PC-9 (cell line): ENCODE measurements at regions of chr12 and their contacts with region 1.

Region 1: GRCh38 chr12:13211859-13212664 is 15.5 kb downstream of the EMP1 start:
- DNase-seq: peak in 1 of 2 experiments; percentile 64
- H3K4me3 ChIP-seq: no peak overlapping the region
- H3K27ac ChIP-seq: peak overlapping the region; percentile 99
- H3K4me1 ChIP-seq: peaks cover 48% of the 10 kb centered on the region
- H3K27me3 ChIP-seq: no peaks in the 10 kb centered on the region
- CTCF ChIP-seq: peak; percentile 71

Region 2: GRCh38 chr12:11877869-11878780 is 1333.9 kb before region 1 on chr12:
- CTCF ChIA-PET with region 1: no interaction called
- POLR2A ChIA-PET with region 1: no interaction called
- intact Hi-C with region 1: loop called (anchors 10 kb)
- DNase-seq: peak; percentile 85 to 93
- H3K4me3 ChIP-seq: peak overlapping the region; percentile 45; the same call in 1 of the 2 replicates
- H3K27ac ChIP-seq: peak overlapping the region; percentile 96
- H3K4me1 ChIP-seq: peaks cover 64% of the 10 kb centered on the region
- H3K27me3 ChIP-seq: no peaks in the 10 kb centered on the region
- CTCF ChIP-seq: no peak

Region 3: DNA sequence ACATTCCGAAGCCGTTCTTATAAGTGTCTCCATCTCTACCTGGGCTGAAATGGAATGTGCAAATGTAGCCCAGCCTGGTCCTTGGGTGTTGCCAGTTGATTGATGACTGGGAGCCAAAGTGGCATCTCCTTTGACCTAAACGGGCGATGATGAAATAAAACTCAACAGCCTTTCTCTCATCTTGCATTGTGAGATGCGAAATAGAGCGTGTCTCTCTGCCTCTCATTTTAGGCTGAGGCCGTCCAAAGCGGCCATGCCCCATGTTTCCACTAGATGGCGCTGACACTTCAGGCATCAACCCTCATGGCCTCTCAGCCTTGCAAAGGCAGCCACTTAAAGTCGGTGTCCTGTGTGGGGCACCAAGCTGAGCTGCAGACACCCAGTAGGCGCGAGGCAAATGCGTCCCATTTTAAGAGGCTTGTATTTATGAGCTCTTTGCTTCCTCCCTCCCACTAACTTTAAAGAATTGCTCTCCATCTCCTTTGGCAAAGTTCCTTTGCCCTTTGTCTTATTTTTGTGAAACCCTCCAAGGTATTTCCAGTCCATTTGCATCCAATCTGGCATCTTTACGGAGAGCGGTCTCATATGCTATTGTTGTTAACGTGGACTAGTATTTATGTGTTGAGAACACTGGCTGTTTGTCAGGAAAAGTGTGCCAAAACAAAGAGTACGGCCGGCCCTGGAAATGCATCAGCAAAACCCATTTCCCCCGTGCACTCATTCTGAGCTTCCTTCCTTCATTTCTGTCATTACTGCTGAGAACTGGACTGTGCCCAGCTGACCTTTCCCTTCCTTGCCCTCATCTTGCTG is 295.7 kb before region 1 on chr12:
- CTCF ChIA-PET with region 1: interaction called, 14 read pairs
- POLR2A ChIA-PET with region 1: no interaction called
- intact Hi-C with region 1: loop called (anchors 5 kb)
- DNase-seq: peak; percentile 55 to 82
- H3K4me3 ChIP-seq: no peak overlapping the region
- H3K27ac ChIP-seq: no peak overlapping the region
- H3K4me1 ChIP-seq: 0 out of 2 replicates have a peak, but pooled peaks cover 5% of the 10 kb centered on the region
- H3K27me3 ChIP-seq: no peaks in the 10 kb centered on the region
- CTCF ChIP-seq: peak; percentile 95

Region 4: DNA sequence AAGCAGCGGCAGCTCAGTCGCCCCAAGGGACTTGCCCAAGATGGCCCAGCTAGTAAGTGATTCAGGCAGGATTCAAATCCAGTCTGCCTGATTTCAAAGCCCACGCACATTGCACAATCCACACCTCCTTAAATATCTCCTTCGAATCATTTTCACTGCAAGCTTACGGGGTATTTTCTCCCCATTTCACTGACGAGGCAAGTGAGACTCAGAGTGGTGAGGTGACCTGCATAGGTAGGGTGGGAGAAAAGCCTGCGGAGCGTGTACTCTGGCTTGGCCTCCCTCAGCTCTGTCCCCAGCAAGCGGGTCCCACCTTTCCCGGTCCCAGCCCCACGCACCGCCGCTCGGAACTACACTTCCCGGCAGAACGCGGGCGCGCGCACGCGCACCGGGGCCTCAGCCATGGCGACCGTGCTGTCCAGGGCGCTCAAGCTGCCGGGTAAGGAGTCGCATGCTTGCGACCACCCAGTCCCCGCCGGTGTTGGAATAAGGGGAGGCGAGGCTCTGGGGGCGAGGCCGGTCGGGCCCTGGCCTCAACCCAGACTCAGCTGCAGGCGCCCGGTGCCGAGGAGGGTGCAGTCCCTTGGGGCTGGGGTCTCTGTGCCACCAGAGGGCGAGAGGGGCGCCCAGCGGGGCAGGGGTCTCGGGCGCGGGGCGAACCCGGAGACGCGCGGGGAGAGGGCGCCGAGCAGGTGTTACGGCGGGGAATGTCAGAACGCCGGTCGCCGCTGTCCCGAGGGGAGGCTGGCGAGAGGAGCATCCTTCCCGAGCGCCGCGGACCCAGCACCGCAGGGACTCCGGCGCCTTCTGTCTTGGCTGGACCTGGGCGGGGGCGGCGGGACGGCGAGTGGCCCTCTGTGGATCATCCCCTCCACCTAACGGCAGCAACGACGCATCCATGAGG is 167.8 kb before region 1 on chr12 and contains the start of gene FAM234B:
- CTCF ChIA-PET with region 1: no interaction called
- POLR2A ChIA-PET with region 1: interaction called, 4 read pairs
- intact Hi-C with region 1: loop called (anchors 5 kb)
- DNase-seq: peak in 1 of 2 experiments; percentile 71
- H3K4me3 ChIP-seq: peak within 1 kb of the TSS; percentile 99
- H3K27ac ChIP-seq: no peak within 1 kb of the TSS
- H3K4me1 ChIP-seq: peaks cover 11% of the 10 kb centered on the region; the same call in 1 of the 2 replicates
- H3K27me3 ChIP-seq: no peaks in the 10 kb centered on the region
- CTCF ChIP-seq: no peak; the same call in 1 of the 2 replicates
- total RNA-seq, gene FAM234B: 7.3 and 7.5 TPM in 2 replicates

Region 5: DNA sequence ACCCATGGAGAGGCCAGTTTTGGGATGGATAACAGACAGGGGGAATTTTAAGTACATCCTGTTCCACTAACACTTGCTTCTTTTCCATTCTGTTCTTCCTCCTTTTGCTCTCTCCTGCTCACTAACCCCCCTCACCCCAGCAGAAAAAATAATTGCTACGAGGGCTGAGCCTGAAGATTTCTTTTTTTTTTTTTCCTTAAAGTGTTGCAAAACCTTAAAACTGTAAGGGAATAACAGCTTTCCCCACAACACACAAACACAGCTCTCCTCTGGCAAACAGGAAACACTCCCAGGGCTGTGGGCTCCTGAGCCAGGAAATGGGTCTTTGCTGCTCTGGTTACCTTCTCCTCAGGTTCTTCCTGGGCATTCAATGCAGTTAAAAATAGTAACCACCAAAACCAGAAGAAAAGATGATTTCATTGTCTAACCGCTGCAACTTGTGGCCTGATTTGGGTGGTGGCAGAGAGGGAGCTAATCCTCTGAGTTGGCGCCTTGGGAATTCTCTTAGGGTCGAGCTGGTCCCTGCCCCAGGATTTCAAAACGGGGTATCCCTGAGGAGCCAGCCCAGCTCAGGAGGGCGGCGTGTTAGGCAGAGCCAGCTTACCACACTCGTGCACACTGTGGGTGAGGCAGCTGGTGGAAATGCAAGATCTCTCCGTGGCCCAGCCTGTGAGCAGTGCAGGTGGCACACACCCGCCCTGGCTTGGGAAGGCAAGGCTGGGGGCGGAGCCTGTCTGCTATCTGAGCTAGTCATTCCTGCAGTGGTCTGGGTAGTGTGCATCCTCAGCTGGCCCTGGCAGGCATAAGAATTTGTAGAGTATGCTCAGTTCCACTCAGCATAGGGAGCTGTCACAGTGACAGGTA is 32.6 kb before region 1 on chr12:
- CTCF ChIA-PET with region 1: interaction called, 10 read pairs
- POLR2A ChIA-PET with region 1: interaction called, 15 read pairs
- intact Hi-C with region 1: no loop called
- DNase-seq: peak; percentile 94 to 95
- H3K4me3 ChIP-seq: peak overlapping the region; percentile 39; the same call in 1 of the 2 replicates
- H3K27ac ChIP-seq: peak overlapping the region; percentile 95
- H3K4me1 ChIP-seq: peaks cover 89% of the 10 kb centered on the region
- H3K27me3 ChIP-seq: no peaks in the 10 kb centered on the region
- CTCF ChIP-seq: no peak